ENCODE measurements at regions of chr21 and their contacts with region 1.

Region 1: DNA sequence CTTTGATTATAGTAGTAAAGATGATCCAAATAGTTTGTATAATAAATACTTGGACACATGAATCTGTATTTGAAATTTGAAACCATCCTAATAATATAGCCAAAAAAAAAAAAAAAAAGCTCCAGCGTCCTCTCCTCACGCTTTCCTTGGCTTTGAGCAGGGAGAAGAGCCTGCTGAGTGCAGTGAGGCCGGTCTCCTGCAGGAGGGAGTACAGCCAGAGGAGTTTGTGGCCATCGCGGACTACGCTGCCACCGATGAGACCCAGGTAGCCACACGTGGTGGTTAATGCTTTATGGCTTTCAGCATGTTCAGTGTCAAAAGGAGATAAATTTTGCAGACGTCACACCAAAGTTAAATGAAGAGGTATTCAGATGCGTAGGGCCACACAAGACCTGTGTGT is 7.9 kb downstream of the PRMT2 start:
- DNase-seq: no peak
- H3K4me3 ChIP-seq: no peak overlapping the region
- H3K27ac ChIP-seq: no peak overlapping the region
- H3K4me1 ChIP-seq: peaks cover under 1 to 13% (median 6%) of the 10 kb centered on the region in 4 experiments
- H3K27me3 ChIP-seq: no peaks in the 10 kb centered on the region

Region 2: DNA sequence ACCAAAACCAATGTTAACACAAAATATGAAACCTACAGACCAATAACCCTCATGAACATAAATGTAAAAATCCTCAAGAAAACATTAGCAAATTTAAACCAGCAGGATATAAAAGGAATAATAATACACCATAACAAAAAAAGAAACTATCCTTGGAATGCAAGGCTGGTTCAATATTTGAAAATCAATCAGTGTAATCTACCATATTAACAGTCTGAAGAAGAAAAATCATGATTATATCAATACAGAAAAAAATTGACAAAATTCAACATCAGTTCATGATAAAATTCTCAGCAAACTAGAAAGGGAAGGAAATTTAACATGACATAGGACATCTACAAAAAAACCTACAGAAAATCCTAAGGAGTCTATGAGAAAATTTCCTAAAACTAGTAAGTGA is 11.9 kb after region 1 on chr21:
- CTCF ChIA-PET with region 1: interaction called, 11 read pairs
- POLR2A ChIA-PET with region 1: interaction called, 3 read pairs
- DNase-seq: peak in 1 of 3 donors; percentile 8
- H3K4me3 ChIP-seq: no peak overlapping the region
- H3K27ac ChIP-seq: no peak overlapping the region
- H3K4me1 ChIP-seq: no peaks in the 10 kb centered on the region
- H3K27me3 ChIP-seq: no peaks in the 10 kb centered on the region

Measured in common myeloid progenitor, CD34-positive (primary cell).